CD4-positive, alpha-beta memory T cell (primary cell): ENCODE measurements at regions of chr15 and their contacts with region 1.

Region 1: GRCh38 chr15:28935326-28935725 is 49.6 kb downstream of the APBA2 start:
- DNase-seq: no peak
- H3K4me3 ChIP-seq: no peak overlapping the region
- H3K4me3 Mint-ChIP-seq: peak overlapping the region in 3 of 8 donors; percentile 11 to 18 (median 18)
- H3K27ac ChIP-seq: no peak overlapping the region
- H3K27ac Mint-ChIP-seq: peak overlapping the region in 4 of 7 donors; percentile 43 to 89 (median 70)
- H3K4me1 ChIP-seq: peaks cover 51% of the 10 kb centered on the region
- H3K4me1 Mint-ChIP-seq: peaks cover 34 to 75% (median 56%) of the 10 kb centered on the region in 4 donors
- H3K27me3 ChIP-seq: no peaks in the 10 kb centered on the region
- H3K27me3 Mint-ChIP-seq: no peaks in the 10 kb centered on the region

Region 2: DNA sequence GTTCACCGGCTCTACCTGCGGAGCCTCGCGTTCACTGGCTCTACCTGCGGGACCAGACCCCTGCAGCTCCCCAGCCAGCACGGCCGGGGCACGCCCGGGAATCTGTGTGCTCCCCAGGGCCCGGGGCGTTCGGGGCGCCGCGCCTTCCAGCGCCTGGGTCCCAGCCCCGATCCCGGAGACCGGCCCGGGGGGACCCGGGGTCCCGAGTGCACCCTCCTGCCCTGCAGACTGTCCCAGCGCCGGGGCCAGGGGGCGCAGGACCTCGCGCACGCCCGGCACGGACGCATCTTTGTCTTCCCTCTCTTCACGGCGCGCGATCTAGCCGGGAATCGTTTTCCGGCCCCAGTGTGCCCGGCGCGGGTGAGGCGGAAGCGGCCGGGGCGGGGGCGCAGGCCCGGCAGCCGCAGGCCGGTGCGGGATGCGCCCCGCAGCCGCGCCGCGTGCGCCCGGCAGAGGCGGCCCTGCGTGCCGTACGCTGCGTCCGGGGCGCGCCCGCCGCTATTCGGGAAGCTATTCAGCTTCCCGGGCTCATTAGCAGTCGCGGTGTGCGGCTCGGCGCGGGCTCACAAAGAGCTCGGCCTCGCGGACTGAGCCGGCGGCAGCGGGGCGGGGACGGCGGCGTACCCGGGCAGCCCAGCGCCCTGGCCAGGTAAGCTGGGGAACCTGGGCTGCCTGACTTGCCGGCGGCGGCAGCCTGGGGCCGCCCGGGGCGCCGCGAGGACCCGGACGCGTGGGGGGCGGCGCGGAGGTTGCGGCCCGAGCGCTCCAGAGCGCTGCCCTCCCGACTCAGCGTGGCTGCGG is 49.5 kb before region 1 on chr15 and contains the start of gene APBA2:
- CTCF ChIA-PET with region 1: interaction called, 4 read pairs
- POLR2A ChIA-PET with region 1: interaction called, 11 read pairs
- intact Hi-C with region 1: loop called (anchors 2 kb)
- DNase-seq: peak; percentile 47 to 61 (median 59)
- H3K4me3 ChIP-seq: peak within 1 kb of the TSS in 1 of 2 donors; percentile 60
- H3K4me3 Mint-ChIP-seq: peak within 1 kb of the TSS; percentile 81 to 91 (median 86)
- H3K27ac ChIP-seq: no peak within 1 kb of the TSS
- H3K27ac Mint-ChIP-seq: peak within 1 kb of the TSS in 6 of 7 donors; percentile 23 to 87 (median 65)
- H3K4me1 ChIP-seq: peaks cover 50% of the 10 kb centered on the region
- H3K4me1 Mint-ChIP-seq: peaks cover 26 to 44% (median 34%) of the 10 kb centered on the region in 4 donors
- H3K27me3 ChIP-seq: no peaks in the 10 kb centered on the region
- H3K27me3 Mint-ChIP-seq: no peaks in the 10 kb centered on the region
- total RNA-seq, gene APBA2: 52.4 to 57.3 TPM

Region 3: DNA sequence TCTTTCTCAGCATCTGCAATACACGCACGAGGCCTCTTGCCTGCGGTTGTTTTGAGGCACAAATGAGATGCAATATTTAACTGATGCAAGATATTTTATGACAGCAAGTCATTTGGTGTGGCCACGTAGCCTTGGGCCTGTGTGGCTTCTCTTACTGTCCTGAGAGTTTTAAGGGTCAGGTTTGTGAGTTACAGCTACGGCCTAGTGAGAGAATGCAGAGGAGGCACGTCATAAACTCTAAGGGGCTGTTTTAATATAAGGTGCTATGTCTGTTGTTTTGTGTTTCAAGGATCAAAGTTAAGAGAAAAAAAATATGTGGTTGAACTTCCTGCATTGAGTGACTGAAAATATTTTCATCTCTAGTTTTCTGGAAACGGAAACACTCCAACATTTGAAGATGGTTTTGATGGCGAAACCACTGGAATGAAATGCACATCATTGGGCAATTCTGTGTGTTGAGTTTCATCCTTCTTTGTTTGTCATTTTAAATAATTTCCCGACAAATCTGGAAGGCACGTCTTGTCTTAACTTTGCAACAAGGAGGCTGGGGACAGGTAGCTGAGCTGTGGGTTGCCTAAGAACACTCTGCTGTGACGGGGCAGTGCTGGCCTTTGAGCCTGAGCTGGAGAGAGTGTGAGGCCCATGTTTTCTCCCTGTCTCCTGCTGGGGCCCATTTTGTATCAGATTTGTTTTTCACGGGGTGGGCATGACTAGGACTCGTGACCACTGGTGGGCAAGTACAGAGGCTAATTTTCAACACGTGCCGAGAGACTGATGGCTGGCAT is 44.4 kb before region 1 on chr15:
- CTCF ChIA-PET with region 1: interaction called, 4 read pairs
- POLR2A ChIA-PET with region 1: interaction called, 11 read pairs
- intact Hi-C with region 1: loop called (anchors 2 kb)
- DNase-seq: peak in 4 of 5 donors; percentile 58 to 70 (median 65)
- H3K4me3 ChIP-seq: no peak overlapping the region
- H3K4me3 Mint-ChIP-seq: peak overlapping the region; percentile 60 to 87 (median 75)
- H3K27ac ChIP-seq: peak overlapping the region; percentile 56
- H3K27ac Mint-ChIP-seq: peak overlapping the region; percentile 92 to 97 (median 96)
- H3K4me1 ChIP-seq: peaks cover 61% of the 10 kb centered on the region
- H3K4me1 Mint-ChIP-seq: peaks cover 42 to 69% (median 57%) of the 10 kb centered on the region in 4 donors
- H3K27me3 ChIP-seq: no peaks in the 10 kb centered on the region
- H3K27me3 Mint-ChIP-seq: no peaks in the 10 kb centered on the region

Region 4: GRCh38 chr15:28909958-28910500 is 25.3 kb before region 1 on chr15:
- CTCF ChIA-PET with region 1: no interaction called
- POLR2A ChIA-PET with region 1: no interaction called
- intact Hi-C with region 1: no loop called
- DNase-seq: no peak
- H3K4me3 ChIP-seq: no peak overlapping the region
- H3K4me3 Mint-ChIP-seq: no peak overlapping the region
- H3K27ac ChIP-seq: no peak overlapping the region
- H3K27ac Mint-ChIP-seq: no peak overlapping the region
- H3K4me1 ChIP-seq: peaks cover 7% of the 10 kb centered on the region
- H3K4me1 Mint-ChIP-seq: peaks cover 13 to 38% (median 17%) of the 10 kb centered on the region in 4 donors
- H3K27me3 ChIP-seq: no peaks in the 10 kb centered on the region
- H3K27me3 Mint-ChIP-seq: no peaks in the 10 kb centered on the region

Region 5: GRCh38 chr15:28989239-28989830 is 54.0 kb after region 1 on chr15:
- CTCF ChIA-PET with region 1: no interaction called
- POLR2A ChIA-PET with region 1: no interaction called
- intact Hi-C with region 1: no loop called
- DNase-seq: no peak
- H3K4me3 ChIP-seq: no peak overlapping the region
- H3K4me3 Mint-ChIP-seq: no peak overlapping the region
- H3K27ac ChIP-seq: no peak overlapping the region
- H3K27ac Mint-ChIP-seq: peak overlapping the region in 1 of 7 donors; percentile 8
- H3K4me1 ChIP-seq: peaks cover 10% of the 10 kb centered on the region
- H3K4me1 Mint-ChIP-seq: peaks cover 13 to 54% (median 17%) of the 10 kb centered on the region in 4 donors
- H3K27me3 ChIP-seq: no peaks in the 10 kb centered on the region
- H3K27me3 Mint-ChIP-seq: no peaks in the 10 kb centered on the region